Activated CD4-positive, alpha-beta T cell treated with anti-CD3 and anti-CD28 coated beads for 36 hours (primary cell): ENCODE measurements at regions of chr9 and their contacts with region 1.

Region 1: GRCh38 chr9:132507746-132508469 is 74.5 kb upstream of the BARHL1 start:
- DNase-seq: peak; percentile 82
- ATAC-seq: peak; percentile 68
- H3K4me3 Mint-ChIP-seq: no peak overlapping the region
- H3K27ac Mint-ChIP-seq: no peak overlapping the region
- H3K4me1 Mint-ChIP-seq: peaks cover 3% of the 10 kb centered on the region
- H3K27me3 Mint-ChIP-seq: peaks cover 3% of the 10 kb centered on the region

Region 2: GRCh38 chr9:132486706-132487350 is 21.1 kb before region 1 on chr9:
- CTCF ChIA-PET with region 1: interaction called, 14 read pairs
- POLR2A ChIA-PET with region 1: no interaction called
- intact Hi-C with region 1: no loop called
- DNase-seq: peak; percentile 76
- ATAC-seq: peak; percentile 94
- H3K4me3 Mint-ChIP-seq: peak overlapping the region; percentile 33
- H3K27ac Mint-ChIP-seq: no peak overlapping the region
- H3K4me1 Mint-ChIP-seq: peaks cover 24% of the 10 kb centered on the region
- H3K27me3 Mint-ChIP-seq: peaks cover 52% of the 10 kb centered on the region

Region 3: GRCh38 chr9:132575005-132575609 is 67.2 kb after region 1 on chr9:
- CTCF ChIA-PET with region 1: interaction called, 8 read pairs
- POLR2A ChIA-PET with region 1: no interaction called
- intact Hi-C with region 1: loop called (anchors 1 to 5 kb)
- DNase-seq: peak; percentile 80
- ATAC-seq: peak; percentile 86
- H3K4me3 Mint-ChIP-seq: no peak overlapping the region
- H3K27ac Mint-ChIP-seq: no peak overlapping the region
- H3K4me1 Mint-ChIP-seq: no peaks in the 10 kb centered on the region
- H3K27me3 Mint-ChIP-seq: peaks cover 51% of the 10 kb centered on the region

Region 4: DNA sequence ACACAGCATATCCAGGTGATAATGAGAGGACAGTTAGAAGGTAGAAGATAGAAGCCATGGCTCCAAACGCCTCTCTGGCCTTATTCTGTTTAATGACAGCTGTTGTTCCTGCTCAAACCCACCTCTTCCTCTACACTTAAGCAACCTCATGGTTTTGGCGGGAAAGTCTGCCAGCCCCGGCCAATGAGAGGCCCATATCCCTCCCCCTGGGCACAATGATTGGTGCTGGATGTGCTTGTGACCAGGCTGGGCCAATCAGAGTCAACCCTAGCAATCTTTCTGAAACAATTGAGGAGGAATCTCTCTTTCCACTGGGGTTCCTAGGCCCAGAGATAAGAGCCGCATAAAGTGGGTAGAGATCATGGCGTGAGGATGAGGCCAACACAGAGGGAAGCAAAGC is 465.8 kb after region 1 on chr9:
- CTCF ChIA-PET with region 1: no interaction called
- POLR2A ChIA-PET with region 1: no interaction called
- intact Hi-C with region 1: loop called in 1 of 2 experiments (anchors 1 kb)
- DNase-seq: peak; percentile 51
- ATAC-seq: peak; percentile 64
- H3K4me3 Mint-ChIP-seq: no peak overlapping the region
- H3K27ac Mint-ChIP-seq: no peak overlapping the region
- H3K4me1 Mint-ChIP-seq: peaks cover 4% of the 10 kb centered on the region
- H3K27me3 Mint-ChIP-seq: peaks cover 18% of the 10 kb centered on the region